Ascending aorta (tissue), 2 donors: ENCODE measurements at regions of chr19 and their contacts with region 1.

Region 1: DNA sequence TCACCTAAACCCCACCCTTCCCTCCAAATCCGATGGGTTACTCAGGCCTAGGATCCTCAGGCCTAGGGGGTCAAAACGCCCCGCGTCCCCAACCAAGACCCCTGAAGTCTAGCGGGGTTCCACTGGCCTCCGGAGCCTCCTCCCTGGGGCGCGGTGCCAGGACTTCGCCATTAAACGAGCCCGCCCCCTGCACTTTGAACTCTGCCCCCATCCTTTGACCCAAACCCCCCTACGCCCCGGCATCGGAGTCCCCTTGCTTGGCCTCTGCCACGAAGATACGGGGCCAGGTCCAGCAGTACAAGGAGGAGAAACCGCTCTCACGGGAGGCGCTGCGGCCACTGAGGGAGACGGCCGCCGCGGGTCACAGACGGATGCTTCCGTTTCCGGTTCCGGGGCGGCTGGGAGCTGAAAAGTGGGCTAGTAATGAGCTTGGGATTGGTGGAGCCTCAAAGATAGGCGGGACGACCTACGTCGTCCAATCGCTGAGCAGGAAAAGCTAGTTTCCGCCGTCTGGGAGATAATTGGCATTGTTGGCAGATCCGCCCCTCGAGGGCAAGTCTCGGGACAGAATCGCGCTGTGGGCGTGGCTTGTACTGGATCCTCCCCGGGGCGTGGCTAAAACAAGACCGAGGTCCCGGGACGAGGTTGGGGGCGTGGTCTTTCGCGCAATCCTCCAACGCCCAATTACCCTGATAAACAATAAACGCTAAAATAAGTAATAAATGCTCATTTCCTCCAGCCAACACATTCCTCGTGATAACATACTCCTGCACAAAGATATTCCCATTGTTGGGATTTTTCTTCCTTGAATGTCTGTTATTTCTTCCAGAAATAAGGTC is 5.7 kb upstream of the ZNF77 start:
- DNase-seq: peak; percentile 99 to 100
- H3K4me3 ChIP-seq: peak overlapping the region; percentile 83 to 86
- H3K27ac ChIP-seq: peak overlapping the region; percentile 97
- H3K4me1 ChIP-seq: peaks cover 6 to 10% of the 10 kb centered on the region in 2 donors
- H3K27me3 ChIP-seq: no peaks in the 10 kb centered on the region
- CTCF ChIP-seq: no peak

Region 2: DNA sequence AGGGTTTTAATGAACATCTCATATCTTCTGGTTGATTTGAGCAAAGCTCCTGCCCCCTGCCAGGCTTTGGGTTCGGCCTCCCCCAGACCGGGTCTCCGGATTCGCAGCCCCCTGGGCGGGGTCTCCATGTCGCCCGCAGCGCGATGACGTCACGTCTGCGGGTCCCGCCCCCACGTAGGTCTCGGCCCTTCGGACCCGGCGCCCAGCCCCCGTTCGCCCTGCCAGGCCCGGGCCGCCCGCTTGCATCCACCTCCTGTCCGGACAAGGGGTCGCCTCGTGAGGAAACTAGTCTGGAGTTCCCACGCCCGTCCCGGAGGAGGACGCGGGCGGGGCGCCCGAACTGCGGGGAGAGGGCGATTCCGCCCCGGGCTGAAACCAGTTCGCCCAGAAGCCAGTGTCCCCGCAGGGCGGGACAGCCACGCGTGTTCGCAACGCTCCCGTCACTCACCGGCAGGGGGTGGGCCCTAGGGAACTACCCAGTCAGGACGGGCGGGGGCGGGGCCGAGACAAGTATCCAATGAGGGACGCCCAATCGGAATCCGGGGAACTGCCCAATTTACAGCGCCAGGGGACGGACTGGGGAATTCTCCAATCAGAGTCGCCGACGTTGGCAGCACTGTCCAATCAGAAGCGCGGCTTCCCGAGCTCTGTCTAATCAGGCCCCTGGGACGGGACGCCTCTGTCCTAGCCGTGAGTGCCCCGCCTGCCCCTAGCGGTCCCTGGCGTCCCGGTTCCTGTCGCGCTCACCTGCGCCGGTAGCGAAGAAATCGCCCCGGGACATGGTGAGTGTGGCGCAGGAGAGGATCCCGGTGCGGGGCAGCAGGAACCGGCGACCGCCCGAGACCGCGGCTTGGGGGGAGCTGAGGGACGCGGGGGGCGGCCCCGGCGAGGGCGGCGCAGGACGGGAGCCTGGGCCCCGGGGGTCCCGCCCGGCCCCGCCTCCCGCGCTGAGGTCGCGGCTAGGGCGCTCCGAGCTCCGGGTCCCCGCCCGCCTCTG is 109.4 kb before region 1 on chr19 and contains the start of gene ZNF555:
- intact Hi-C with region 1: loop called (anchors 2 kb)
- DNase-seq: peak; percentile 99 to 100
- H3K4me3 ChIP-seq: peak within 1 kb of the TSS; percentile 96 to 99
- H3K27ac ChIP-seq: peak within 1 kb of the TSS; percentile 95
- H3K4me1 ChIP-seq: peaks cover 0 to 10% of the 10 kb centered on the region in 2 donors
- H3K27me3 ChIP-seq: no peaks in the 10 kb centered on the region
- CTCF ChIP-seq: peak; percentile 32 to 74 (median 61)
- total RNA-seq, gene ZNF555: 6.8 TPM

Region 3: DNA sequence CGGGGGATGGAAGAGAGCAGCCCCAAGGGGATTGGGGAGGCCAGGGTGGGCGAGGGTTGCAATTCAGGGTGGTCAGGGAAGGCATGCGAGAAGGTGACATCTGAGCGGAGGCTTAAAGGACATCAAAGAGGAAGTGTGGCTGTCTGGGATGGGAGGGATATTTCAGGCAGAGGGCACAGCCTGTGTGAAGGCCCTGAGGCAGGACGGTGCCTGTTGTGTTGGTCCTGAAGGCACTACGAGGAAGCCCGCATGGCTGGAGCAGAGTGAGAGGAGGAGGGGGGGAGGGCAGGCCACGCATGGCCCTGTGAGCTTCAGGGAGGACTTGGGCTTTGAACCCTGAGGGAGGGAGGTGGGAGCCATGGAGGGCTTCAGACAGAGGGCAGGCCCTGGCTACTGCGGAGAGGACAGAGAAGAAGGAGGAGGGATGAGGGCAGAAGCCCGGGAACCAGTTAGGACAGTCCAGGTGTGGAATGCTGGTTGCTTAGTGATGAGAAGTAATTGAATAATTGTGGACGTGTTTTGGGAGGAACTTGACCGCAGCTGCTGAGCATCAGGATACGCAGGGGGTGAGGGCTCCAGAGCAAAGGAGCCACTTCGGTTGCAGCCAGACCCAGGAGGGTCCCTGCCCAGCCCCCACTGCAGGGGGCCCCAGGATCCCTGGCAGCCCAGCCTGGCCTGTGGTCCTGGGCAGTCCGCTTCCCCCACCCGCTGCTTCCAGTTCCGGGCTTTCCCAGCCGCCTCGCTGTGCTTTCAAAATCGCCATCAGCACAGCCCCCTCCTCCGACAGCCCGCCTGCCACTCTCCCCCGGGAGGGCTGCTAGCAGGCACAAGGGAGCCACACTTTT is 33.1 kb after region 1 on chr19:
- intact Hi-C with region 1: loop called (anchors 1 kb)
- DNase-seq: peak; percentile 53 to 70
- H3K4me3 ChIP-seq: peak overlapping the region; percentile 46 to 61
- H3K27ac ChIP-seq: peak overlapping the region; percentile 88 to 96
- H3K4me1 ChIP-seq: peaks cover 15 to 23% of the 10 kb centered on the region in 2 donors
- H3K27me3 ChIP-seq: no peaks in the 10 kb centered on the region
- CTCF ChIP-seq: no peak

Region 4: GRCh38 chr19:3094601-3095437 is 144.3 kb after region 1 on chr19:
- intact Hi-C with region 1: loop called (anchors 2 kb)
- DNase-seq: no peak
- H3K4me3 ChIP-seq: peak overlapping the region; percentile 86 to 98
- H3K27ac ChIP-seq: peak overlapping the region; percentile 66 to 90
- H3K4me1 ChIP-seq: peaks cover 34 to 44% of the 10 kb centered on the region in 2 donors
- H3K27me3 ChIP-seq: no peaks in the 10 kb centered on the region
- CTCF ChIP-seq: no peak

Region 5: GRCh38 chr19:3185482-3186376 is 235.2 kb after region 1 on chr19 and contains the start of gene NCLN:
- intact Hi-C with region 1: loop called (anchors 1 kb)
- DNase-seq: peak; percentile 78 to 96
- H3K4me3 ChIP-seq: peak within 1 kb of the TSS; percentile 89 to 98
- H3K27ac ChIP-seq: peak within 1 kb of the TSS; percentile 60 to 75
- H3K4me1 ChIP-seq: peaks cover 13 to 16% of the 10 kb centered on the region in 2 donors
- H3K27me3 ChIP-seq: no peaks in the 10 kb centered on the region
- CTCF ChIP-seq: no peak
- total RNA-seq, gene NCLN: 118 TPM